ENCODE measurements at regions of chr20 and their contacts with region 1.

Region 1: DNA sequence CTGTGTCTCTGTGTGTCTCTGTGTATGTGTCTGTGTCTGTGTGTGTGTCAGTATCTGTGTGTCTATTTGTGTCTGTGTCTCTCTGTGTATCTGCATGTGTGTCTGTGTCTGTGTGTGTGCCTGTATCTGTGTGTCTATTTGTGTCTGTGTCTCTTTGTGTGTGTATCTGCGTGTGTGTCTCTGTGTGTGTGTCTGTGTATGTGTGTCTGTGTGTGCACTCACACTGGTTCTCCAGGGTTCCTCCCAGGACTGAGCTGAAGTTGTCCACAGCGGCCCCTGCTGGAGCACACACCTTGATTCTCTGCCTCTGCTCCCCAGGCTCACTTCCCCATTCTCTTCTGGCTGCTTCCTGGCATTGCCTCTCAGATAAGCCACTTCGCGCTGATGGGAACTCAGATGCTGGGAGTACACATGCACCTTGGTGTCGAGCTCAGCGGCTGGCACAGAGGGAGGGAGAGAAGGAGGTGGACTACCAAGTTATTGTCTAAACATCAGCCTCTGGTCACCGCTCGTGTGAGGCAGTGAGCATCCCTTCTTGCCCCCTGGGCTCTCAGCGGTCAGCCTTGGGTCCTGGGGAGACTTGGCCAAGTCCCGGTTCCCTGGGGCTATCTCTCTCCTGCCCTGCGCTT is 104.9 kb upstream of the NXT1 start:
- DNase-seq: peak; percentile 13
- H3K4me3 ChIP-seq: no peak overlapping the region
- H3K27ac ChIP-seq: no peak overlapping the region
- H3K4me1 ChIP-seq: no peaks in the 10 kb centered on the region
- H3K27me3 ChIP-seq: no peaks in the 10 kb centered on the region
- CTCF ChIP-seq: peak; percentile 12 to 40

Region 2: GRCh38 chr20:22757424-22758183 is 488.1 kb before region 1 on chr20:
- CTCF ChIA-PET with region 1: no interaction called
- dilution Hi-C with region 1: no loop called
- in situ Hi-C with region 1: no loop called
- intact Hi-C with region 1: no loop called
- DNase-seq: no peak
- H3K4me3 ChIP-seq: no peak overlapping the region
- H3K27ac ChIP-seq: no peak overlapping the region
- H3K4me1 ChIP-seq: peaks cover 21% of the 10 kb centered on the region
- H3K27me3 ChIP-seq: no peaks in the 10 kb centered on the region
- CTCF ChIP-seq: no peak

Region 3: DNA sequence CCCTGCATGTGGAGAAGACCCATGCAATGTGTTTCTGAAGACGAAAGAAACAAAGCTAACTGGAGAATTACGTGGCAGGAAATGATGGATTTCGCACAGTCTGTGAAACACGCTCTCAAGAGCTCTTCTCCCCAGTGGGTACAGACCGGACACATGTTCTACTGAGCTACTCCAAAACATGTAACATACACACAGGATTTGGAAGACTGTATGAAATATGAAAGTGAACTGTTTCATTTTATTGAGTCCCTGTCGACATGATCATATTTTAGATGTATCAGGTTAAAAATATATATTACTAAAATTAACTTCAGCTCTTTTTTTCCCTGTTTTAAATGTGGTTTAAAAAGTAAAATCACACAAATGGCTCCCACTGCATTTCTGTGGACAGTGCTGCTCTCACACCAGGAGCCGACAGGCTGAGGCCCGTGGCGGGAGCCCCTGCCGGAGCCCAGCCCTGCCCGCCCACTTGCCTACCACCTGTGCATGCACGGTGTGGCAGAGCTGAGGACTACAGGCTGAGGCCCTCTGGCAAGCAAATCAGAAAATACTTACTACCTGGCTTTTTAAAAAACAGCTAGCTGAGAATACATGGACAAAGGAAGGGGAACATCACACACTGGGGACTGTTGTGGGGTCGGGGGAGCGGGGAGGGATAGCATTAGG is 46.0 kb after region 1 on chr20:
- CTCF ChIA-PET with region 1: no interaction called
- dilution Hi-C with region 1: no loop called
- in situ Hi-C with region 1: no loop called
- intact Hi-C with region 1: loop called (anchors 2 kb)
- DNase-seq: no peak
- H3K4me3 ChIP-seq: no peak overlapping the region
- H3K27ac ChIP-seq: no peak overlapping the region
- H3K4me1 ChIP-seq: no peaks in the 10 kb centered on the region
- H3K27me3 ChIP-seq: peaks cover 2% of the 10 kb centered on the region
- CTCF ChIP-seq: no peak

Measured in mammary epithelial cell (primary cell).